ENCODE measurements at regions of chr3 and their contacts with region 1.

Region 1: GRCh38 chr3:157785102-157785826 is 282.0 kb upstream of the VEPH1 start:
- DNase-seq: peak; percentile 97
- ATAC-seq: peak; percentile 89
- H3K4me3 ChIP-seq: peak overlapping the region; percentile 37; the same call in 1 of the 2 replicates
- H3K27ac ChIP-seq: peak overlapping the region; percentile 83
- H3K4me1 ChIP-seq: peaks cover 66% of the 10 kb centered on the region
- H3K27me3 ChIP-seq: no peaks in the 10 kb centered on the region
- CTCF ChIP-seq: no peak

Region 2: DNA sequence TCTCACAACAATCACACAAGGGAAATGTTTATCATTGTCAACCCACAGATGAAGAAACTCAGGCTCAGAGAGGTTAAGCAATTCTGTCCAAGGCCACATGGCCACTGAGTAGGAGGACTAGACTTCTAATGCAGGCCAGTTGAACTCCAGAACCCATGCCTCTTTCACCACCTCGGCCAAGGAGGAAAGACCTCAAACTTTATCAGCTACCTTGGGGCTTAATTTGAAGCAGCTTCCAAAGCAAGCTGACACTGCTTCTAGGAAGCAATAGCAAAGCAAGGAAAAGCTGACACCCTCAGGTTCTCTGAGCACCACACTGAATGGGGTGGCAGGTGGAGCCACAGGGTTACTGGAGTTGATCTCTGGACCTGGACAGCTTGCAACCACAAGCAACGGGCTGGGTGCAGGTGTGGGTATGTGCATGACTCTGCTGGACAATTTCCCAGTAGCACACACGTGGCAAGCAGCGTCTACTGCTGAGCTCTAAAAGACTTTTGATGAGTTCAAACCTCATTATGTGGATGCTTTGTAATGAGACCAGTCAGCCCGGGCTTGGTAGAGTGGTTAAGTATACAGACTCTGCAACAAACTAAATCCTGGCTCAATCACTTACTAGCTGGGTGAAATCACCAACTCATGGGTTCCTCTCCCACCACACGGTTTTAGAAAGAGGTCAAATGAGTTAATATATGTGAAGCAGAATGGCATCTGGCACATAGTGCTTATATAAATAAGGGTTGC is 648.4 kb before region 1 on chr3:
- CTCF ChIA-PET with region 1: no interaction called
- POLR2A ChIA-PET with region 1: no interaction called
- intact Hi-C with region 1: no loop called
- DNase-seq: peak; percentile 63
- ATAC-seq: peak; percentile 27
- H3K4me3 ChIP-seq: no peak overlapping the region
- H3K27ac ChIP-seq: peak overlapping the region; percentile 99
- H3K4me1 ChIP-seq: peaks cover 56% of the 10 kb centered on the region
- H3K27me3 ChIP-seq: no peaks in the 10 kb centered on the region
- CTCF ChIP-seq: no peak

Region 3: DNA sequence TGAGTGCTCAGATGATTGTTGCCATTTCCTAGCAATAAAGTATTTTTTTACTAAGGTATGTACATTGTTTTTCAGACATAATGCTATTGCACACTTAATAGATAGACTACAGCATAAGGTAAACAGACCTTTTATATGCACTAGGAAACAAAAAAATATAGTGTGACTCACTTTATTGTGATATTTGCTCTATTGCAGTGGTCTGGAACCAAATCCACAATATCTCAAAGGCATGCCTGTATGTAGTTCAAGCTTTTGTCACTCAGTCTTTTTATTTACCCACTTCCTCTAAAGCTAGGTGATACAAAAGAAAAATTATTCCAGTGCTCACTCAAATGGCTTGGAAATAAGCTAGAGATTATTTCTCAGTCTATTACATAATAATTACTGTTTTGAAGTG is 72.2 kb before region 1 on chr3:
- CTCF ChIA-PET with region 1: no interaction called
- POLR2A ChIA-PET with region 1: no interaction called
- intact Hi-C with region 1: loop called (anchors 1 kb)
- DNase-seq: peak; percentile 59
- ATAC-seq: peak; percentile 97
- H3K4me3 ChIP-seq: no peak overlapping the region
- H3K27ac ChIP-seq: no peak overlapping the region
- H3K4me1 ChIP-seq: peaks cover 10% of the 10 kb centered on the region
- H3K27me3 ChIP-seq: no peaks in the 10 kb centered on the region
- CTCF ChIP-seq: no peak

Region 4: DNA sequence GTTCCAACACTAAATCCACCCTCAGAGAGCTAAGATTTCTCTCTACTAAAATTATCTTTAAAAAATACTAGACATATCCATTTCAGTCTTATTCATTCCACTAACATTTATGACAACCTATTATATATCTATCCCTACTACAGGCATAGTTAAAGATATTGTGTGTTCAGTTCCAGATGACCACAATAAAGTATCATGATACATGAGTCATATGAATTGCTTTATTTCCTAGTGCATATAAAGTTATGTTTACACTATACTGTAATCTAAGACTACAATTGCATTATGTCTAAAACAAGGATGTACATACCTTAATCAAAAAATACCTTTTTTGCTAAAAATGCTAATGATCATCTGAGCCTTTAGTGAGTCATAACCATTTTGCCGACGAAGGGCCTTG is 301.5 kb after region 1 on chr3:
- CTCF ChIA-PET with region 1: no interaction called
- POLR2A ChIA-PET with region 1: no interaction called
- intact Hi-C with region 1: loop called (anchors 10 kb)
- DNase-seq: peak; percentile 86
- ATAC-seq: peak; percentile 97
- H3K4me3 ChIP-seq: no peak overlapping the region
- H3K27ac ChIP-seq: peak overlapping the region; percentile 75
- H3K4me1 ChIP-seq: peaks cover 31% of the 10 kb centered on the region
- H3K27me3 ChIP-seq: no peaks in the 10 kb centered on the region
- CTCF ChIP-seq: no peak

Region 5: GRCh38 chr3:158167737-158168471 is 382.6 kb after region 1 on chr3:
- CTCF ChIA-PET with region 1: no interaction called
- POLR2A ChIA-PET with region 1: no interaction called
- intact Hi-C with region 1: loop called (anchors 5 kb)
- DNase-seq: peak; percentile 90
- ATAC-seq: peak; percentile 94
- H3K4me3 ChIP-seq: no peak overlapping the region
- H3K27ac ChIP-seq: peak overlapping the region; percentile 49
- H3K4me1 ChIP-seq: peaks cover 26% of the 10 kb centered on the region
- H3K27me3 ChIP-seq: no peaks in the 10 kb centered on the region
- CTCF ChIP-seq: no peak